Astrocyte of the cerebellum (primary cell): ENCODE measurements at regions of chr7 and their contacts with region 1.

Region 1: GRCh38 chr7:98870121-98870651 is 372 bp upstream of the TMEM130 start:
- DNase-seq: no peak
- H3K4me3 ChIP-seq: peak overlapping the region; percentile 38
- CTCF ChIP-seq: no peak

Region 2: DNA sequence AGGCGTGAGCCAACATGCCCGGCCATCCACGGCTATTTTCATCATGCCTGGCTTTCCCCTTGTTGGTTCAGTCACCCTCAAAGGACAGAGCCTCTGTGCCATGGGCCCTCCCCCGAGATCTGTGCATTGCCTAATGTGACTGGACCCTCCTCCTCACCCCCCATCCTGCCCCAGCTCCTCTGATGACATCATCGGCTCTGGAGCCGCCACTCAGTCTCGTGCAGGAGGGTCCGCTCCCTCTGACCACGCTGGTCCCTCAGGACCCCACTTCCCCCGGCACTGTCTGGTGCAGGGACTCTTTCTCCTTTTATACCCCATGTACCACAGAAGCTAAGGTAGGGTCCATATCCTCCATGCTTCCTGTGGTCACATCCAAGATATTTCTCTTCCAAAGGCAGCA is 436.1 kb before region 1 on chr7:
- in situ Hi-C with region 1: loop called (anchors 25 kb)
- DNase-seq: no peak
- H3K4me3 ChIP-seq: no peak overlapping the region
- CTCF ChIP-seq: no peak

Region 3: DNA sequence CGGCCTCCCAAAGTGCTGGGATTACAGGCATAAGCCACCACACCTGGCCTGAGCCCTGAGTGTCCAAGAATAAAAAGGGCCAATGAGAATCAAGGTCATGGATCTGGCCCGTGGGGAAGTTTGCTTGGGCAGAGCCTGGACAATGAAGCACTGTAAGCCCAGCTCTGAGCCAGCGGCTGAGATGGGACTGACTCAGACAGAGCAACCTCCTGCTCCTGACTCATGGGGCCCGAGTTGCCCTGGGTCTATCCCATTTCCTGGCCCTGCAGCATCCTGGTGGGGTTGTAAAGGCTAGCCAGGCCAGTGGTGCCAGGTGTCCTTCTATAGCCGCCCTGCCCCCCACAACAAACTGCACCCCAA is 397.3 kb after region 1 on chr7:
- in situ Hi-C with region 1: no loop called
- DNase-seq: peak; percentile 41
- H3K4me3 ChIP-seq: no peak overlapping the region
- CTCF ChIP-seq: no peak